Dorsolateral prefrontal cortex (tissue), 120 donors: ENCODE measurements at regions of chr9 and their contacts with region 1.

Region 1: GRCh38 chr9:133532937-133533668 is 1.4 kb upstream of the ADAMTSL2 start:
- DNase-seq: peak in 8 of 10 donors; percentile 55 to 78 (median 72)
- H3K4me3 ChIP-seq: peak overlapping the region in 2 of 59 donors; percentile 70
- H3K27ac ChIP-seq: peak overlapping the region in 38 of 59 donors; percentile 9 to 91 (median 85)
- H3K27me3 ChIP-seq: no peaks in the 10 kb centered on the region
- CTCF ChIP-seq: peak in 51 of 56 donors; percentile 23 to 72 (median 46)

Region 2: DNA sequence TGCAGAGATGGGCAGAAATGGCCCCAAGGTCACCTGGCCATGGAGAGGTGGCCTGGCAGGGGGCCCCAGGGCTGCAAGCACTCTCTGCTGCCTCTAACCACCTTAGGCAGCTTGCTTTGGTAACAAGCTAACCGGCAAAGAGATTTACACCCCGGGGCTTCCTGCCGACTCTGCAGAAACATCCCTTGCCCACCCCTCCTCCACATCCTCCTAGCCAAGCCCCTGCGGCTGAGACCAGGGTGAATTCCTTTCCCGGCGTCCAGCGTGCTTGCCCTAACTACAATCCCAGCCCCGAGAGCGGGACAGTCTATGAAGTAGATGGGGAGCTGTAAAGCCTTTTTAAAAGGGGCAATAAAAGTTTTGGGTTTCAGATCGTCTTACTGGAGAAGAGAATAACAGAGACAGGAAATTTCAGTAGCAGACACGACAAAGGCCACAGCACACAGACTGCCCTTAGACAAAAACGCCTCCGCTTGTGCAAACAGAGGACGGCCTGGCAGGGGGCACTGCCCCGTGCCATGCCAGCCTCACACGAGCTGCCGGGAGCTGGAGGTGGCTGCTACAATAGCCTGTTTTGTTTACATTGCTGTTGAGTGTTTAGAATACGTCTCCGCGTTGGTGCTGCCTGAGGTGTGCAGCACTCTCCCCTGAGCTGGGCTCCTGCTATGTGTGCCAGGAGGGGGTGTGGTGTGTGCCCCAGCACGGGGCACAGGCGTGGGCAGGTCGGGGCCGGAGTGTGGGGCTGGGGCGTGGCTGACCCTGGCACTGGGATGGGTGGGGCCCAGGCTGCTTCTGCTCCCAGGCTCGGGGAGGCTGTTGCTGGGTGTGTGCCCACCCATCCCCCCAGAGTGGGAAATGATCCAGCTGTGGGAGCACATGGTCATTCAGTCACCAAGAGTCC is 23.7 kb before region 1 on chr9:
- intact Hi-C with region 1: loop called in 1 of 2 experiments (anchors 2 kb)
- DNase-seq: peak in 4 of 10 donors; percentile 29 to 66 (median 56)
- H3K4me3 ChIP-seq: peak overlapping the region in 26 of 59 donors; percentile 2 to 50 (median 15)
- H3K27ac ChIP-seq: peak overlapping the region in 58 of 59 donors; percentile 1 to 93 (median 77)
- H3K27me3 ChIP-seq: no peaks in the 10 kb centered on the region
- CTCF ChIP-seq: peak in 20 of 56 donors; percentile 9 to 52 (median 24)

Region 3: GRCh38 chr9:133572821-133573361 is 39.8 kb after region 1 on chr9:
- intact Hi-C with region 1: loop called in 1 of 2 experiments (anchors 5 kb)
- DNase-seq: peak; percentile 40 to 90 (median 86)
- H3K4me3 ChIP-seq: peak overlapping the region in 29 of 59 donors; percentile 4 to 55 (median 20)
- H3K27ac ChIP-seq: peak overlapping the region in 52 of 59 donors; percentile 7 to 81 (median 63)
- H3K27me3 ChIP-seq: no peaks in the 10 kb centered on the region
- CTCF ChIP-seq: peak in 19 of 56 donors; percentile 2 to 55 (median 23)

Region 4: GRCh38 chr9:133726401-133727276 is 193.5 kb after region 1 on chr9:
- intact Hi-C with region 1: loop called (anchors 5 to 10 kb)
- DNase-seq: peak in 9 of 10 donors; percentile 36 to 82 (median 67)
- H3K4me3 ChIP-seq: no peak overlapping the region
- H3K27ac ChIP-seq: peak overlapping the region in 1 of 59 donors; percentile 66
- H3K27me3 ChIP-seq: peaks cover 0 to 9% (median 0%) of the 10 kb centered on the region in 45 donors
- CTCF ChIP-seq: peak; percentile 28 to 77 (median 56)